ENCODE measurements at regions of chr6 and their contacts with region 1.

Region 1: DNA sequence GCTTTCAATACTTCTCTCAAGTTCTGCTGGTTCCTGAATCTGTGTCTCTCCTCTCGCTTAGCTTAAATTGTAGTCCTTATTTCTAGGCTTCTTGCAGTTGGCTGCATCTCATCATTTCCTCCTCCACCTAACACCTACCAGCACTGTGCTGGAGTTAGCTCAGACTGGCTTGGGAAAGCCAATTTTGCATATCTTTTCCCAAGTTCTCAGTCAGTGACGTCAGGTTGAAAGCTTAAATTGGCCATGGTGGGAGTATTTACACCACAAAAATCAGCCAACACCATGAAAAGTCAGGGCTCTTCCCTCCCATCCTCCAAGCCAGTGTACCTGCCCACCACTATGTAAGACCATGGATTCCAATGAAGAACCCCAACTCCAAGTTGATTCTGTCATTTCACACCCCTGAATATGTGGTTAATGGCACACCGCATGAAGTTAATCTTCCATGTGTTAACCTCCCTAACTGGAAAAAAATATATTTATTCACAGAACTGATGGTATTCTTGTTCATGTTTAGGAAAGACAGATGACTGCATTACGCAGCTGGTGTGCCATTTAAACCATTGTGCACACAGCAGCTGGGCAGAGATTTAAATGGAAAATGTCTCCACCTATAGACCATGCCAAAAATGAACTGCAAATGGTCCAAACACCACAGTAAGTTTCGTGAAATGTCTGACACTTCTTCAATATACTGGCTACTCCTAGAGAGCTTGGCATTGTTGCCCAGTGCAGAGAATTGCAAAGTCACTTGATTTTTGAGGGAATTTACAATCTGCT is 274.1 kb upstream of the MAP3K7 start:
- DNase-seq: no peak
- ATAC-seq: peak; percentile 65
- H3K4me3 ChIP-seq: no peak overlapping the region
- H3K27ac ChIP-seq: no peak overlapping the region
- H3K4me1 ChIP-seq: no peaks in the 10 kb centered on the region
- H3K27me3 ChIP-seq: no peaks in the 10 kb centered on the region
- CTCF ChIP-seq: peak; percentile 20 to 33 (median 33); a peak in 4 of 6 replicates
- EP300 ChIP-seq: no peak
- POLR2A ChIP-seq: no peak
- RAD21 ChIP-seq: peak; percentile 11; the same call in 1 of the 2 replicates

Region 2: DNA sequence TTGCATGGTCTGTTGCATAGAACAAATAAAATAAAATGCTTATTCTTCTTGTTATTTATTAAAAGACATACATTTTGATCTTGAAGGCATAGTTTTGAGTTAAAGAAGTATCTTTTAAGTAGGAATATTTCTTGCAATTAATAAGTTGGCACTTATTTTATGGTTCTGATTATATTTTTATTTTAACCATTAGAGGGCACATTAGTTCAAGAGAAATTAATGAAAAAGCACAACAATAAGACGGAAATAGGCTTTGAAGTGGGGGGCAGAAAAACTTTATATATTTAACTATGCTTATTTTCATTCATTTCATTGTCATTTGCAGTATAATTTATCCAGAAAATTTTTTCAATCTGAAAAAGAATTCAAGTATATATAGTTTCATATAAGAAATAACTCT is 230.0 kb before region 1 on chr6:
- CTCF ChIA-PET with region 1: no interaction called
- POLR2A ChIA-PET with region 1: no interaction called
- RAD21 ChIA-PET with region 1: no interaction called
- SMC1A ChIA-PET with region 1: interaction called, 4 read pairs
- in situ Hi-C with region 1: no loop called
- intact Hi-C with region 1: loop called (anchors 10 kb)
- DNase-seq: no peak
- ATAC-seq: no peak
- H3K4me3 ChIP-seq: no peak overlapping the region
- H3K27ac ChIP-seq: no peak overlapping the region
- H3K4me1 ChIP-seq: no peaks in the 10 kb centered on the region
- H3K27me3 ChIP-seq: no peaks in the 10 kb centered on the region; a peak in 1 of 4 replicates
- CTCF ChIP-seq: no peak
- EP300 ChIP-seq: no peak
- POLR2A ChIP-seq: no peak
- RAD21 ChIP-seq: no peak

Region 3: DNA sequence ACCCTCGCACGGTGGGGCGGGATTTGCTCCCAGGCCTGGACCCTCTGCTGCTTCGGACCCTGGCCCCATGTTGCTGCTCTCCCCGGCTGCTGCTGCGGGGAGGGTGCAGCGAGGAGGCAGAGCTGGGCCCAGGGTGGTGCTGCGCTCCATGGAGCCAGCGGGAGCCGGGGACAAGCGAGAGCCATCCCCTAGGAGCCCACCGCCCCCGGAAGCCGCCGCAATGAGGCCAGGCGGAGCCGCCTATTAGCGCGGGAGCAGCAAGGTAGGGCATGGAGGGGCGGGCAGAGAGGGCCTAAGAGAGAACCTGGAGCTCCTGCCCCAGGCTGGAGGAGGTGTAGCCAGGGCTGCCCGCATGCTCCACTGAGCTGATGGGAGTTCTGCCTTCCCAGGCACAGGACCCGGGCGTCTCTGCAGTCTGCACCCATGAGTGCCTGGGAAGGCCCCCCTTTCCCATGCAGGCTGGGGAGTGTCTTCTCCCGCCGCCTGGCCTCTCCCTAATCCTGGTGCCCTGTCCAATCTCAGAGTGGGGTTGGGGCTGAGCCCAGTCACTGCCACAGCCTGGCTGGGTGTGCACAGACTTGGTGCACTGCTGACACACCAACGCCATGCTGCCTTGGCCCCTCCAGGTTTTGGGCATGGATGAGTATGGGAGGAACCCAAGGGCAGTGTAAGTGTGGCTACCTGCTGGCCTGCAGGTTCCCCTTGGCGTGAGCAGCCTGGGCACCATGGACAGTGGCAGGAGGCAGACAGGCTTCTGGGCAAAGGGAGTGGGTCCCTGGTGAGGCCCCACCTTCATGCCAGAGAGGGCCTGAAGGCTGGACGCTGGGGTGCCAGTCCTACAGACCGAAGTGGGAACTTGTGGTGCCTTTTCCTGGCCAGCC is 86.4 kb after region 1 on chr6:
- CTCF ChIA-PET with region 1: no interaction called
- POLR2A ChIA-PET with region 1: no interaction called
- RAD21 ChIA-PET with region 1: no interaction called
- SMC1A ChIA-PET with region 1: no interaction called
- in situ Hi-C with region 1: no loop called
- intact Hi-C with region 1: no loop called
- DNase-seq: no peak
- ATAC-seq: no peak
- H3K4me3 ChIP-seq: no peak overlapping the region
- H3K27ac ChIP-seq: no peak overlapping the region
- H3K4me1 ChIP-seq: no peaks in the 10 kb centered on the region
- H3K27me3 ChIP-seq: no peaks in the 10 kb centered on the region
- CTCF ChIP-seq: no peak
- EP300 ChIP-seq: no peak
- POLR2A ChIP-seq: no peak
- RAD21 ChIP-seq: no peak